ENCODE measurements at regions of chr17 and their contacts with region 1.

Region 1: DNA sequence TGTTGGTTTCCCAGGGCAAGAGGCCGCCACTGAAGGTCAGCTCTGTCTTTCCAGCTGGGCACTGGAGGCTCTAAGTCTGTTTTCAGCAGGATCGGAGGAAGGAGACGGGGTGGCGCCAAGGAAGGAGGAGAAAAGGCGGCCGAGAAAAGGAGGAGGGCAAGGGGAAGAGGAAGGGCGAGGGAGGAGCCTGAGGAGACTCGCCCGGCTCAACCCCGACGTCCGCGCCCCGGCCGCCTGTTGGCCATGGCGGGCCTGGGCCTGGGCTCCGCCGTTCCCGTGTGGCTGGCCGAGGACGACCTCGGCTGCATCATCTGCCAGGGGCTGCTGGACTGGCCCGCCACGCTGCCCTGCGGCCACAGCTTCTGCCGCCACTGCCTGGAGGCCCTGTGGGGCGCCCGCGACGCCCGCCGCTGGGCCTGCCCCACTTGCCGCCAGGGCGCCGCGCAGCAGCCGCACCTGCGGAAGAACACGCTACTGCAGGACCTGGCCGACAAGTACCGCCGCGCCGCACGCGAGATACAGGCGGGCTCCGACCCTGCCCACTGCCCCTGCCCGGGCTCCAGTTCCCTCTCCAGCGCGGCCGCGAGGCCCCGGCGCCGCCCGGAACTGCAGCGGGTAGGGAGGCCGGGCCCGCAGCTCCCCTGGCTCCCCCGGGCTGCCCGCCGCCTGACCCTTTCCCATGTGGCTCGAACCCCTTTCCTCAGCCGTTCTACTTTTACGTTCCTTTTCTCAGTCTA is at the start of gene RNF135:
- DNase-seq: peak; percentile 48 to 58 (median 54)
- H3K4me3 ChIP-seq: peak within 1 kb of the TSS; percentile 85 to 90
- H3K4me3 Mint-ChIP-seq: peak within 1 kb of the TSS; percentile 95 to 99 (median 96)
- H3K27ac ChIP-seq: peak within 1 kb of the TSS; percentile 18
- H3K27ac Mint-ChIP-seq: peak within 1 kb of the TSS; percentile 68 to 95 (median 92)
- H3K4me1 ChIP-seq: peaks cover 13% of the 10 kb centered on the region
- H3K4me1 Mint-ChIP-seq: peaks cover 16 to 32% (median 19%) of the 10 kb centered on the region in 4 donors
- H3K27me3 ChIP-seq: no peaks in the 10 kb centered on the region
- H3K27me3 Mint-ChIP-seq: no peaks in the 10 kb centered on the region
- total RNA-seq, gene RNF135: 3.9 to 7.1 TPM

Region 2: DNA sequence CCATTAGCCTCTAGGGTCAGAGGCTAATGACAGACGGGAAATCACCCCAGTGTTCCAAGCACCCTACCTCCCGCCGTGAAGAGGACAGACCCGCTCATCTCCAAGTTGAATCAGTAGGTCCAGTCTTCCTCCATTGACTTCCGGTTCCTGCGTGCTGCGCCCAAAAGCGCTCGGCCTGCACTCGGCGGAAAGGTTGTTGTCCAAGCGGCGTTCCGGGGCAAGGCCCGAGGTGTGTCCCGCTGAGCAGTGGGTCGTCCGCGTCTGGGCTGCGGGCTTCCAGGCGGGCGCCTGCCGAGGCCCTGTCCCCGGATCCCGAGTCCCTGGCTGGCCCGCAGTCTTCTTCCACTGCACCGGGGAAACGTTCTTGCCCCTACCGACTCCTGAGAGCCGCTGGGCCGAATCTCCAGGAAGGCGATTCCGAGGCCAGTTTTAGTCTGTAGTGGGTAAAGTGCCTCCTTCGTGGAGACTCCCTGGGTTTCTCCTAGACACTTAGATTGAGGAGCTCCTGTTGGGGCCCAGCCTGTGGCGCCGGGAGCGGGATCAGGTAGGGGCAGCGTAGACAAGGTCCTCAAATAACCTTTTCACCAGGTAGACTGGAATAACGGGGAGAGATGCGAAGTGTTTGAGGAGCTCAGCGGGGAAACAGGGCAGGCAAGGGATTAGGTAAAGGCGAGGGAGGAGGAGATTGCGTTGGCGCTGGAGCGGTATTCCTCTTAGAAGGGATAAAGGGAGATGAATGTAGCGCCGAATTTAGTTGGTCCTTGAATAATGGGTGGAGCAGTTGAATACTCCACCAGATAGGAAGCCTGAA is 64.7 kb before region 1 on chr17 and contains the start of gene TEFM:
- CTCF ChIA-PET with region 1: no interaction called
- POLR2A ChIA-PET with region 1: interaction called, 5 read pairs
- intact Hi-C with region 1: loop called (anchors 1 kb)
- DNase-seq: peak; percentile 82 to 87 (median 84)
- H3K4me3 ChIP-seq: peak within 1 kb of the TSS; percentile 71 to 94
- H3K4me3 Mint-ChIP-seq: peak within 1 kb of the TSS; percentile 87 to 97 (median 91)
- H3K27ac ChIP-seq: peak within 1 kb of the TSS; percentile 79
- H3K27ac Mint-ChIP-seq: peak within 1 kb of the TSS; percentile 81 to 98 (median 92)
- H3K4me1 ChIP-seq: peaks cover 38% of the 10 kb centered on the region
- H3K4me1 Mint-ChIP-seq: peaks cover 29 to 58% (median 42%) of the 10 kb centered on the region in 4 donors
- H3K27me3 ChIP-seq: no peaks in the 10 kb centered on the region
- H3K27me3 Mint-ChIP-seq: no peaks in the 10 kb centered on the region
- total RNA-seq, gene TEFM: 20.2 to 21.3 TPM

Measured in CD4-positive, alpha-beta memory T cell (primary cell).